ENCODE measurements at regions of chr11 and their contacts with region 1.

Region 1: DNA sequence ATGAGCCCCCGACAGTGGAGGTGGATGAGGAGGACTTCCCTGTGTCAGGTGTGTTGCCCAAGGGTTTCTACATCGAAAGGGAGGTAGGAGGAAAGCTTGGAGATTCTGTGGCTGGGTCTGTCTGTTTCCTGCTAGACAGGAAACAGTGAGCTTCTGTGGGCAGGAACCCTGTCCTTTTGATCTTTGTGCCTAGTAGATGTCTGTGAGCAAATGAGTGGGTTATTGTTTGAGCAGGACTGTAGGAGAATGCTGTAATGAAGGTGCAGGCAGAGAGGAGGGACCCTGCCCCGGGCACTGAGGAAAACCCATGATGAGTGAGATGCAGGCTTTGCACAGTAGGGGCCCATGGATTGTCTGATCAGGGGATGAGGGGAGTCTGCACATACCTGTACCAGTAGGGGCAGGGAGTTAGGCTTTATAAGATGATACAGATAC is 14.0 kb downstream of the USP35 start:
- DNase-seq: peak; percentile 43 to 93 (median 60)
- ATAC-seq: peak; percentile 76
- H3K4me3 ChIP-seq: peak overlapping the region; percentile 30
- H3K4me3 Mint-ChIP-seq: peak overlapping the region; percentile 86
- H3K27ac ChIP-seq: peak overlapping the region; percentile 53 to 98
- H3K27ac Mint-ChIP-seq: peak overlapping the region; percentile 98
- H3K4me1 ChIP-seq: peaks cover 64% of the 10 kb centered on the region
- H3K4me1 Mint-ChIP-seq: peaks cover 51% of the 10 kb centered on the region
- H3K27me3 ChIP-seq: no peaks in the 10 kb centered on the region
- H3K27me3 Mint-ChIP-seq: no peaks in the 10 kb centered on the region
- CTCF ChIP-seq: no peak

Region 2: DNA sequence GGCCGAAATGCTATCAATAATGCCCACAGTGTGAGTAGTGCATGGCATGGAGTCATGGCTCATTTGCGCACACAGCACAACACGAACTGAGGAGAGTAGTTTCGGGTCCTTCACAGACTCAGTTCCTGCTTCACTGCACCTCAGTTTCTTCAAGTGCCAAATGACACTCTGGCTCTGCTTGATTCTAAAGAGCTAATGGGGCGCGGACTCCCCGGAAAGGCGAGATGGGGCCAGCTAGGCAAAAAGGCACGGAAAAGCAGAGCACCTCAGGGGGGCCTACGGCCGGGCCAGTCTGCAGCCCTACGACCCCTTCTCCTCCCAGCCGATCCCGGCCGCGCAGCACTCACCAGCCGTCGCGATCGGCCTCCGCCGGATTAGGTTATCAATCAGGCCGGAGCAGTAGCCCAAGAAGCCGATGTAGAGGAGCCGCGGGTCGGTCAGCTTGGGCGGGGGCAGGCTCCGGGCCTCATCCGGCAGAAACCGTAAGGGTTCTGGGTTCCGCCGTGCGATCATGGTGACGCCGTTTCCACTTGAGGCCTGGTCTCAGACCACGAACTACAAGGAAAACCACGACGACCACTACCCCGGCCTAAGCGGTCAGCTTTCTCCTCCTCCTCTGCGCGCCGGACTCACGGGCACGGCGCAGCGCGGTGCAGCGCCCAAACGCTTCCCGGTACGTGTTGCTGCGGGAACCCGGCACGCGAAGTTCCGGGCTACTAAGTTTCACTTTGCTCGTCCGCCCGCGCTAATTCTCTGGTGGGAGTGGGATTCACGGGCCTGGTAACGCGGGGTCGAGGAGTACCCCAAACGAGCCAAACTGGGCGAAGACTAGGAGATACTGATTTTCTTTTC is 123.3 kb before region 1 on chr11 and contains the start of gene NDUFC2:
- CTCF ChIA-PET with region 1: no interaction called
- POLR2A ChIA-PET with region 1: interaction called, 4 read pairs
- intact Hi-C with region 1: loop called in 1 of 2 experiments (anchors 1 kb)
- DNase-seq: peak; percentile 45 to 82 (median 58)
- ATAC-seq: peak; percentile 79
- H3K4me3 ChIP-seq: peak within 1 kb of the TSS; percentile 88
- H3K4me3 Mint-ChIP-seq: peak within 1 kb of the TSS; percentile 96
- H3K27ac ChIP-seq: peak within 1 kb of the TSS; percentile 57 to 65
- H3K27ac Mint-ChIP-seq: peak within 1 kb of the TSS; percentile 93
- H3K4me1 ChIP-seq: peaks cover 41% of the 10 kb centered on the region
- H3K4me1 Mint-ChIP-seq: peaks cover 60% of the 10 kb centered on the region
- H3K27me3 ChIP-seq: no peaks in the 10 kb centered on the region
- H3K27me3 Mint-ChIP-seq: no peaks in the 10 kb centered on the region
- CTCF ChIP-seq: no peak
- total RNA-seq, gene NDUFC2: 62.6 to 68.5 TPM

Region 3: GRCh38 chr11:78161962-78162371 is 40.8 kb before region 1 on chr11:
- CTCF ChIA-PET with region 1: no interaction called
- POLR2A ChIA-PET with region 1: no interaction called
- intact Hi-C with region 1: no loop called
- DNase-seq: no peak
- ATAC-seq: no peak
- H3K4me3 ChIP-seq: no peak overlapping the region
- H3K4me3 Mint-ChIP-seq: no peak overlapping the region
- H3K27ac ChIP-seq: no peak overlapping the region
- H3K27ac Mint-ChIP-seq: no peak overlapping the region
- H3K4me1 ChIP-seq: no peaks in the 10 kb centered on the region
- H3K4me1 Mint-ChIP-seq: no peaks in the 10 kb centered on the region
- H3K27me3 ChIP-seq: no peaks in the 10 kb centered on the region
- H3K27me3 Mint-ChIP-seq: no peaks in the 10 kb centered on the region
- CTCF ChIP-seq: no peak